ENCODE measurements at regions of chr10 and their contacts with region 1.

Region 1: DNA sequence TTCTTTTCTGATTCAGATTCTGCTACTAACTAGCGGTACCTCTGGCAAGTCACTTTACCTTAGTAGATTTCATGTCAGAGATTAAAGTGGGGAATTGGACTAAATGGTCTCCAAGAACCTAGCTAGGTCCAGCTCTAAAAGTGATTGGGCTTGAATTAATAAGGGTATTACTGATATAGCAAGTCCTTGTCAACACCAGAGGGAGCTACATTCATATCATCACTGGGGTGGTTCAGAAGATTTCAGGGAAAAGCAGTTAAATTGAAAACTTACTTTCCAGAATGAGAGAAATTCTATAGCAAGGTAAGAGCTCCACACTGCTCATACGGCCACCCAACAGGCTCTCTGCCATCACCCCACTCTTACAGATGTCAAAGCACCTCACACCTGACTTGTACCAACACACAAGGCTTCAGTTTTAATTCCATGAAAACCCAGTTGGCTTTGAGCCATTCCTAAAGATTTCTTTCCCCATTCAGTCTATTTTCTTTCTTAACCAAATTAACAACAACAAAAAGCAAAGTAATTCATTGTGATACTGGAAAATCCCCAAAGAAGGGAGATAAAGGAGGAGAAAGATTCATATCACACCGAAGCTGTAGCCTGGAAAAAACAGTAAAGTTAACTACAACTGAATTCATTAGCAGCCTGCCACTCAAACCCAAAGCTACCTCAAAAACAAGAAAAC is 38.0 kb upstream of the SPOCK2 start:
- DNase-seq: peak; percentile 58 to 73
- ATAC-seq: peak; percentile 62 to 84; a peak in 5 of 6 replicates
- H3K4me3 ChIP-seq: no peak overlapping the region
- H3K27ac ChIP-seq: peak overlapping the region; percentile 51 to 65
- H3K4me1 ChIP-seq: peaks cover 39% of the 10 kb centered on the region; the same call in 2 of the 3 replicates
- CTCF ChIP-seq: peak; percentile 85
- EP300 ChIP-seq: no peak
- POLR2A ChIP-seq: no peak
- RAD21 ChIP-seq: peak; percentile 85 to 88

Region 2: DNA sequence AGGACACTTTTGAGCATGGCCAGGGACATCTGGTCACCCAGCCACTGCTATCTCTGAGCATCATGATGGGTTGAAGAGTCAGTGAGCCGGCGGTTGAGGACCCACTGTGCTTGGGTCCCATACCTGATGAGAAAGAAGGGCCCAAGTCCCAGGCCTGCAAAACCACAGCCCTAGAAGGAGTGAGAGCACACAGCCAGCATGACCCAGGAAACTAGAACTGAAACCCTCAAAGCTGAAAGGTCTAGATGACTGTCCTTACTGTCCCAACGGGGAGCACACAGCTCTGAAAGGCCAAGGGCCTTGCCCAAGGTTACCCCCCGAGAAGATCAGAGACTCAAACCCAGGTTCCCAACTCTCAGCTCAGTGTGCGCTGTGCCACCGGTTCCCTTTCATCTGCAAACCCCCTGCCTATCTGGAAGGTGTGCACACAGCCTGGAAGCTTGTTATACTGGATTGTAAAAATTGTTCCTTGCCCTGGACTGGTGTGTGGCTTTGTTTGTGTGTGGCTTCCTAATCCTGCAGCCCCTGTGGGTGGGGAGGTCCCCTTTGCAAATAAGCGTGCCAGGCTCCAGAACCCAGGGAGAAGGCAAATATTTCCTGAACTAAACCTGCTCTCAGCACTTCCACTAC is 252.6 kb before region 1 on chr10:
- CTCF ChIA-PET with region 1: no interaction called
- POLR2A ChIA-PET with region 1: no interaction called
- DNase-seq: no peak
- ATAC-seq: no peak
- H3K4me3 ChIP-seq: no peak overlapping the region
- H3K27ac ChIP-seq: peak overlapping the region; percentile 62 to 90; a peak in 5 of 6 replicates
- H3K4me1 ChIP-seq: peaks cover 36% of the 10 kb centered on the region
- CTCF ChIP-seq: no peak
- EP300 ChIP-seq: no peak
- POLR2A ChIP-seq: no peak
- RAD21 ChIP-seq: no peak

Region 3: DNA sequence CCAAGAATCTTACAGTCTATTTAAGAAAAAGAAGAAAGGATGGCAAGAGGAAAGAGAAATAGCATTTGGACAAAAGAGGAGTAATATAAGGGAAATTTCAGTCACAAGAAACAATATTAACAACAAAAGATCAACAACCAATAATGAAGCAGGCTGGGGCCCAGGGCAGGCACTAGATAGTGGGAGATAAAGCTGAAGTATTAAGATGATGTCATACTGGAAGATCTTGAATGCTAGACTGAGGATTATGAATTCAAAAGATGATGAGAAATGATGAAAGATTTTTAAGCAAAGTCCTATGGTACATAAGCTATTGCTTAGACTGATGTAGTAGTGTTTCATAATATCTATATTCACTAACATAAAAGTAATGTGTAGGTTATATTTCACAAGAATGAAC is 13.8 kb after region 1 on chr10:
- CTCF ChIA-PET with region 1: interaction called, 24 read pairs
- POLR2A ChIA-PET with region 1: no interaction called
- DNase-seq: no peak
- ATAC-seq: peak in 1 of 2 experiments; percentile 45; a peak in 2 of 6 replicates
- H3K4me3 ChIP-seq: no peak overlapping the region
- H3K27ac ChIP-seq: peak overlapping the region in 1 of 2 experiments; percentile 15; a peak in 2 of 6 replicates
- H3K4me1 ChIP-seq: peaks cover 14% of the 10 kb centered on the region; the same call in 2 of the 3 replicates
- CTCF ChIP-seq: no peak
- EP300 ChIP-seq: no peak
- POLR2A ChIP-seq: no peak
- RAD21 ChIP-seq: no peak

Region 4: DNA sequence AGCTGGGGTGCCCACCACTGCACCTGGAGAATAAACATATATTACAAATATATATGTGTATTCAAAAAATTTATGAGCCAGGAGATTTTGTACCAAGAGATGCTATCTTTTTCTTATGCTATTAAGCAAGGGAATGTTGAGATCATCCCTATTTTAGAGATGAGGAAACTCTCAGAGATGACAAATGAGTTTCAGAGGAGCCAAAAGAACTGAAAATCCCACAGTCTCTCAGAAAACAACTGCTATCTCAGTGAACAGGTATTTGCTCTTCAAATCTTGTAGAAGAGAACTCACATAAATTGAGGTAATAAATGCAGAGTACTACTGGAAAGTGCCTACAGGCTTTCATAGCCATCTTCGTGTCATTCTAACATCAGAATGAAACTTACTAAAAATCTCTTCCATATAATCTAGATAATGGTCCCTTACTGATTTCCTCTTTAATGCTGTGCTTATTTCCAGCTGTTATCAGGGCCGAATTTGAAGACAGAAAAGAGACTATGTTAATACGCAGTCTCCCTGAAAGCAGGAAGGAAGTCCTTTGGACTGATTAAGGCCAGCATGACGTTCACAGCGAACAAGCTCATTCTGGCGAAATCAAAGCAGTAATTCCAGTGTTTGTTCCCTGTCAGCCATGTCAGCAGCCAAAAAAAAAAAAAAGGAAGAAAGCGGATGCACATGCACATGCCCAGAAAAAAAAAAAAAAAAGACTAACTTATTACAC is 60.1 kb after region 1 on chr10:
- CTCF ChIA-PET with region 1: interaction called, 18 read pairs
- POLR2A ChIA-PET with region 1: no interaction called
- DNase-seq: no peak
- ATAC-seq: no peak
- H3K4me3 ChIP-seq: no peak overlapping the region
- H3K27ac ChIP-seq: peak overlapping the region in 1 of 2 experiments; percentile 42; a peak in 1 of 6 replicates
- H3K4me1 ChIP-seq: 0 out of 3 replicates have a peak, but pooled peaks cover 7% of the 10 kb centered on the region
- CTCF ChIP-seq: no peak
- EP300 ChIP-seq: no peak
- POLR2A ChIP-seq: no peak
- RAD21 ChIP-seq: no peak

Region 5: GRCh38 chr10:72223743-72224101 is 97.4 kb after region 1 on chr10:
- CTCF ChIA-PET with region 1: interaction called, 91 read pairs
- POLR2A ChIA-PET with region 1: interaction called, 5 read pairs
- DNase-seq: no peak
- ATAC-seq: no peak
- H3K4me3 ChIP-seq: no peak overlapping the region
- H3K27ac ChIP-seq: peak overlapping the region; percentile 66 to 82
- H3K4me1 ChIP-seq: peaks cover 38% of the 10 kb centered on the region
- CTCF ChIP-seq: no peak
- EP300 ChIP-seq: no peak
- POLR2A ChIP-seq: no peak
- RAD21 ChIP-seq: no peak

Region 6: DNA sequence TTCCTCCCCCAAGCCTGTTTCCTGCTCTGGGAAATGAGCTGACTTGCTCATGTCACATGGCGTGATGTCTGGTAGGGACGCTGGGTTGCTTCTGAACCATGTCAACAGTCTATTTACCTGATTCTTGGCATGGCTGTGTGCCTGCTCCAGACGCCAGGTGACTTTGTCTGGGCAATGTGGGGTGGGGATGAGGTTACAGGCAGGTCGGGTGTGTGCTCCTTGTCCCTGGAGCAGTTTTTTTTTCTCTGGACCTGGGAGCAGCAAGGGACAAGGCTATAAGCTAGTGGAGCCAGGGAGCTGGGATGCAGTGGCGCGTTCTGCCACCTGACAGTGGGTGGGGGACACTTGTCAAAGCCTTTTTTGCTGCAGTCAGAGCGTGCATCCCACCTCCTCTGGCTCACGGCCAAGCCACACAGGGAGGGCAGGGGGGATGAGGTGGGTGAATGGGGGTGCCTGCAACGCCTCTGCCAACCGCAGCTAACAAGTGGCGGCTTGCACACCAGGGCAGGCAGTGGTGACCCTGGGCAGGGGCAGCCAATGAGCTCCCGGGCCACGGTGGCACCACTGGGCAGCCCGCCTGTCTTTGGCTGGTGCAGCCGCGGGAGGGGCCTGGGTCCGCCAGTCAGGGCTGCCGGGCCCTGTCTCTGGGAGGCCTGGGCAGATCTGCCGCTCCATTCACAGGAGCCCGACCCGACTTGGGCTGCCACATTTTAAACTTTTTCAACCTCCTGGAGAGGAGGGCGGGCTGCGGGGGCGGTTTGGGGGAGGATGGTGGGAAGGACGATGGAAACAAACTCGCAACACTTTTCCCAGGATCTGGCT is 205.5 kb after region 1 on chr10:
- CTCF ChIA-PET with region 1: interaction called, 44 read pairs
- POLR2A ChIA-PET with region 1: no interaction called
- DNase-seq: peak in 1 of 2 experiments; percentile 64
- ATAC-seq: peak in 1 of 2 experiments; percentile 34; a peak in 3 of 6 replicates
- H3K4me3 ChIP-seq: no peak overlapping the region
- H3K27ac ChIP-seq: peak overlapping the region; percentile 58 to 77
- H3K4me1 ChIP-seq: peaks cover 76% of the 10 kb centered on the region
- CTCF ChIP-seq: no peak
- EP300 ChIP-seq: no peak
- POLR2A ChIP-seq: no peak
- RAD21 ChIP-seq: no peak

Measured in A549 (cell line).